ENCODE measurements at regions of chr5 and their contacts with region 1.

Region 1: DNA sequence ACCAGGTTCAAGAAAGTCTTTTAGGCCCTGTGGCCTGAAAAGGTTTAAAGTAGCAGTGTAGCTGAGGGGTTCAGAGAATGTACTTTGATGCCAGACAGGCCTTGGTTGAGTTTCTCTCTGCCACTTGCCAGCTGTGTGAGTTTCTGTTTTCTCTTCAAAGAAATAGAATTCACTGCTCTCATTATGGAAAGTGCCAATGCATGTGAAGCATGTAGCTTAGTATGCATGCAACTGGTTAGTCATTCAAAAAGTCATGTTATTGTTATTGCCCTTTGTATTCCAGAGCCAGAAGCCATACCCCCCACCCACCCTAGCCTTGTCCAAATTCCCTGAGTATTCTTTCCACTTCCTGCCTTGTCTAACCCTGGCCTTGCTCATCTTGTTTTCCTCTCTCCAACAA is 101.7 kb downstream of the ADRB2 start:
- DNase-seq: no peak
- H3K4me3 ChIP-seq: no peak overlapping the region
- H3K27ac ChIP-seq: no peak overlapping the region
- H3K4me1 ChIP-seq: peaks cover 24% of the 10 kb centered on the region
- H3K27me3 ChIP-seq: no peaks in the 10 kb centered on the region
- CTCF ChIP-seq: no peak

Region 2: DNA sequence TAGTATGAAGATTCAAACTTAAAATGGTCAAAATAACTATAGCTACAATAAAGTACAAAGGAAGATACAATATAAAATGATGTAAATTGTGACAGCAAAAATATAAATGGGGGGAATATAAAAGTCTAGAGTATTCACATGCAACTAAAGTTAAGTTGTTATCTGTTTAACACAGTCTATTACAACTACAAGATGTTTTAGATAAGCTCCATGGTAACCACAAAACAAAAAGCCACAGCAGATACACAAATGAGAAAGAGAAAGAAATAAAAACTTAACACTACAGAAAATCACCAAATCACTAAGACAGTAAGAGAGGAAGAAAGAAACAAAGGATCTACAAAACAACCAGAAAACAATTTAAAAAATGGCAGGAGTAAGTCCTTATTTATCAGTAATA is 151.7 kb after region 1 on chr5:
- CTCF ChIA-PET with region 1: interaction called, 11 read pairs
- POLR2A ChIA-PET with region 1: no interaction called
- intact Hi-C with region 1: no loop called
- DNase-seq: no peak
- H3K4me3 ChIP-seq: no peak overlapping the region
- H3K27ac ChIP-seq: no peak overlapping the region
- H3K4me1 ChIP-seq: peaks cover 6% of the 10 kb centered on the region
- H3K27me3 ChIP-seq: no peaks in the 10 kb centered on the region
- CTCF ChIP-seq: no peak

Measured in PC-9 (cell line).